ENCODE measurements at regions of chr17 and their contacts with region 1.

Region 1: GRCh38 chr17:29640413-29640812 is 17.7 kb upstream of the CORO6 start:
- DNase-seq: no peak
- ATAC-seq: no peak
- H3K4me3 Mint-ChIP-seq: no peak overlapping the region
- H3K27ac Mint-ChIP-seq: peak overlapping the region; percentile 12
- H3K4me1 Mint-ChIP-seq: peaks cover 19% of the 10 kb centered on the region
- H3K27me3 Mint-ChIP-seq: no peaks in the 10 kb centered on the region

Region 2: GRCh38 chr17:29622337-29623282 is 17.8 kb before region 1 on chr17 and contains the start of gene CORO6:
- CTCF ChIA-PET with region 1: interaction called, 110 read pairs
- POLR2A ChIA-PET with region 1: interaction called, 4 read pairs
- DNase-seq: peak; percentile 67
- ATAC-seq: peak; percentile 47
- H3K4me3 Mint-ChIP-seq: peak within 1 kb of the TSS; percentile 78
- H3K27ac Mint-ChIP-seq: no peak within 1 kb of the TSS
- H3K4me1 Mint-ChIP-seq: peaks cover 61% of the 10 kb centered on the region
- H3K27me3 Mint-ChIP-seq: peaks cover 3% of the 10 kb centered on the region
- total RNA-seq, gene CORO6: 6.2 to 6.3 TPM

Region 3: GRCh38 chr17:29653995-29654714 is 13.7 kb after region 1 on chr17:
- CTCF ChIA-PET with region 1: interaction called, 21 read pairs
- POLR2A ChIA-PET with region 1: no interaction called
- DNase-seq: no peak
- ATAC-seq: no peak
- H3K4me3 Mint-ChIP-seq: no peak overlapping the region
- H3K27ac Mint-ChIP-seq: no peak overlapping the region
- H3K4me1 Mint-ChIP-seq: peaks cover 5% of the 10 kb centered on the region
- H3K27me3 Mint-ChIP-seq: no peaks in the 10 kb centered on the region

Region 4: GRCh38 chr17:29705386-29705785 is 65.0 kb after region 1 on chr17:
- CTCF ChIA-PET with region 1: interaction called, 19 read pairs
- POLR2A ChIA-PET with region 1: no interaction called
- DNase-seq: no peak
- ATAC-seq: no peak
- H3K4me3 Mint-ChIP-seq: peak overlapping the region; percentile 54
- H3K27ac Mint-ChIP-seq: peak overlapping the region; percentile 91
- H3K4me1 Mint-ChIP-seq: peaks cover 42% of the 10 kb centered on the region
- H3K27me3 Mint-ChIP-seq: no peaks in the 10 kb centered on the region

Region 5: GRCh38 chr17:29760761-29761696 is 120.6 kb after region 1 on chr17:
- CTCF ChIA-PET with region 1: interaction called, 14 read pairs
- POLR2A ChIA-PET with region 1: interaction called, 7 read pairs
- DNase-seq: peak; percentile 94
- ATAC-seq: peak; percentile 92
- H3K4me3 Mint-ChIP-seq: peak overlapping the region; percentile 87
- H3K27ac Mint-ChIP-seq: peak overlapping the region; percentile 99
- H3K4me1 Mint-ChIP-seq: peaks cover 44% of the 10 kb centered on the region
- H3K27me3 Mint-ChIP-seq: no peaks in the 10 kb centered on the region

Region 6: GRCh38 chr17:29777663-29778062 is 137.2 kb after region 1 on chr17:
- CTCF ChIA-PET with region 1: interaction called, 143 read pairs
- POLR2A ChIA-PET with region 1: interaction called, 8 read pairs
- DNase-seq: no peak
- ATAC-seq: no peak
- H3K4me3 Mint-ChIP-seq: no peak overlapping the region
- H3K27ac Mint-ChIP-seq: no peak overlapping the region
- H3K4me1 Mint-ChIP-seq: peaks cover 13% of the 10 kb centered on the region
- H3K27me3 Mint-ChIP-seq: no peaks in the 10 kb centered on the region

Measured in activated CD8-positive, alpha-beta T cell treated with anti-CD3 and anti-CD28 coated beads, Interleukin-2, amount 10 ng/mL, durations not matched to agents 7 days and 5 days (primary cell).